ENCODE measurements at regions of chr3 and their contacts with region 1.

Region 1: GRCh38 chr3:157130467-157131251 is 29.3 kb downstream of the CCNL1 start:
- DNase-seq: no peak
- ATAC-seq: no peak; the same call in 2 of the 3 replicates
- H3K4me3 ChIP-seq: no peak overlapping the region
- H3K27ac ChIP-seq: peak overlapping the region; percentile 44
- H3K4me1 ChIP-seq: peaks cover 34% of the 10 kb centered on the region
- H3K27me3 ChIP-seq: no peaks in the 10 kb centered on the region
- CTCF ChIP-seq: peak; percentile 59 to 69 (median 65)
- EP300 ChIP-seq: no peak
- POLR2A ChIP-seq: no peak
- RAD21 ChIP-seq: peak; percentile 80

Region 2: DNA sequence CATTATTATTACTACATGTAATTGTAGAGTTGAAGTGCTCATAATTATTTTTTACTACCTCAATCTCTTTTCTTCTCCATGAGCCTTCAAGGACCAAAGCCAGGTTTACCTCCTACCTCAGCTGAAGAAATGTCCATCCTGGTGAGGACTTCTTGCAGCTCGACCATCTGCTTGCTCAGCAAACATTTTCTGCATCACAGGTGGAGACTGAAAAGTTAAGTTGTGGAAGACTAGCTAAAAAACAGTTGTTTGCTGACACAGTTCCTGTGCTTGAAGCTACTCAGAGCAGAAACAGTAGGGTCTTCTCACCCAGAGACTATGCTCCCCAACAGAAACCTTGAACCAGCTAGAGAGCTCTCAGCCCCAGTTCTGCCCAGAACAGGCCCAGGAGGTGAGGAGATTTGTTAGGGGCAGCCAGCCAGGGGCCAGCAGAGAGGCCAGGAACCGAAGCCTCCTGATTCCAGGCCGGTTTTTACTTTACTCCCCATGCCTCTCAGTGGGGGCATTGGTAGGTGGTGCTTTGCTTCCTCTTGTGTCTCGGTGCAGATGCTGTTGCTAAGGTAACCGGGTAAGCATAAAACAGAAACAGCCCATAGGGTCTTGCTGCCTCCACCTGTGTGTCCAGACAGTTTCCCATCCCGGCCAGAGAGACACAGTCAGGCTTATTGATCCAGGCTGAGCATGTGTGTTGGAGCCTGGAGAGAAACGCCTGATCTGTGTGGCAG is 25.6 kb before region 1 on chr3:
- CTCF ChIA-PET with region 1: interaction called, 939 read pairs
- POLR2A ChIA-PET with region 1: interaction called, 3 read pairs
- RAD21 ChIA-PET with region 1: interaction called, 13 read pairs
- SMC1A ChIA-PET with region 1: interaction called, 85 read pairs
- in situ Hi-C with region 1: no loop called
- intact Hi-C with region 1: no loop called
- DNase-seq: no peak
- ATAC-seq: peak; percentile 71
- H3K4me3 ChIP-seq: no peak overlapping the region
- H3K27ac ChIP-seq: peak overlapping the region; percentile 63; the same call in 1 of the 2 replicates
- H3K4me1 ChIP-seq: peaks cover 31% of the 10 kb centered on the region
- H3K27me3 ChIP-seq: no peaks in the 10 kb centered on the region
- CTCF ChIP-seq: no peak
- EP300 ChIP-seq: no peak
- POLR2A ChIP-seq: no peak
- RAD21 ChIP-seq: no peak

Region 3: DNA sequence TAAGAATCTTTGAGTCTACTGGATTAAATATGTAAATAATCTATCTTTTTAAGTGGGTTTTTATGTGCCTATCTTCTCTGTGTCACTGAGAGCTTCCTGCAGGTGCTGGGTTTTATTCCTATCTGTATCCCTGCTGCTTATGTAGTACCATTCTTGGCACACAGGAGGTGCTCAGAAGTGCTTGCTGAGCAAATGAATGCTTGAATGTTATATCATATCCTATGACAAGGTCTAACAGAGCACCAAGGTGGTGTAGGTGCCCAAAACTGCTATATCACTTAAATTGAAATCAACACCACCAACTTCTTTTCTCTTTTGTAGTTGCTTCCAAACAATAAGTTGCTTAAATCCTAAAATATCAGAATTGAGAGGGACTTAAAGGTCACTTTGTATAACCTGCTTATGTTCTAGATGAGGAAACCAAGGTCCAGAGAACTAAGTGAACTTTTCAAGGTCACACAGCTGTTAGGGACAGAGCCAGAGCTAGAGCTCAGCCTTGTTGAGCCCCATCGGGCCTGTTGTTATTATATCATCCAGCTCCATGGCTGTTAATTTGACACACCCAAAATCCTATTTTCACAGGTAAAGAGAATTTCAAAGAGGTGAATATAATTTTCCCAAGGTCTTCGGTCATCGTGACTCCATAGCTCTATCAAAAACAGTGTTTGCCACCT is 16.7 kb before region 1 on chr3:
- CTCF ChIA-PET with region 1: interaction called, 939 read pairs
- POLR2A ChIA-PET with region 1: interaction called, 3 read pairs
- RAD21 ChIA-PET with region 1: interaction called, 4 read pairs
- SMC1A ChIA-PET with region 1: interaction called, 85 read pairs
- in situ Hi-C with region 1: no loop called
- intact Hi-C with region 1: no loop called
- DNase-seq: no peak
- ATAC-seq: peak; percentile 67
- H3K4me3 ChIP-seq: no peak overlapping the region
- H3K27ac ChIP-seq: no peak overlapping the region
- H3K4me1 ChIP-seq: no peaks in the 10 kb centered on the region
- H3K27me3 ChIP-seq: no peaks in the 10 kb centered on the region; a peak in 1 of 4 replicates
- CTCF ChIP-seq: 0 out of 6 replicates have a peak, but pooled peaks of 2 of the 3 experiments have one; percentile 3 to 21
- EP300 ChIP-seq: no peak
- POLR2A ChIP-seq: no peak
- RAD21 ChIP-seq: no peak

Region 4: GRCh38 chr3:157405457-157405856 is 274.8 kb after region 1 on chr3:
- CTCF ChIA-PET with region 1: no interaction called
- POLR2A ChIA-PET with region 1: no interaction called
- RAD21 ChIA-PET with region 1: no interaction called
- SMC1A ChIA-PET with region 1: no interaction called
- in situ Hi-C with region 1: no loop called
- intact Hi-C with region 1: no loop called
- DNase-seq: no peak
- ATAC-seq: no peak
- H3K4me3 ChIP-seq: no peak overlapping the region
- H3K27ac ChIP-seq: no peak overlapping the region
- H3K4me1 ChIP-seq: no peaks in the 10 kb centered on the region
- H3K27me3 ChIP-seq: no peaks in the 10 kb centered on the region
- CTCF ChIP-seq: no peak
- EP300 ChIP-seq: no peak
- POLR2A ChIP-seq: no peak
- RAD21 ChIP-seq: no peak